Activated CD4-positive, alpha-beta memory T cell treated with anti-CD3 and anti-CD28 coated beads for 36 hours (primary cell): ENCODE measurements at regions of chr17 and their contacts with region 1.

Region 1: GRCh38 chr17:33520426-33521330 is 227.6 kb upstream of the ASIC2 start:
- DNase-seq: peak; percentile 59
- H3K4me3 Mint-ChIP-seq: no peak overlapping the region
- H3K27ac Mint-ChIP-seq: no peak overlapping the region
- H3K4me1 Mint-ChIP-seq: no peaks in the 10 kb centered on the region
- H3K27me3 Mint-ChIP-seq: no peaks in the 10 kb centered on the region

Region 2: GRCh38 chr17:33049781-33050414 is 470.8 kb before region 1 on chr17:
- CTCF ChIA-PET with region 1: no interaction called
- POLR2A ChIA-PET with region 1: no interaction called
- intact Hi-C with region 1: loop called (anchors 10 kb)
- DNase-seq: peak; percentile 51
- H3K4me3 Mint-ChIP-seq: no peak overlapping the region
- H3K27ac Mint-ChIP-seq: no peak overlapping the region
- H3K4me1 Mint-ChIP-seq: no peaks in the 10 kb centered on the region
- H3K27me3 Mint-ChIP-seq: peaks cover 12% of the 10 kb centered on the region

Region 3: GRCh38 chr17:33750943-33751701 is 230.4 kb after region 1 on chr17:
- CTCF ChIA-PET with region 1: interaction called, 4 read pairs
- POLR2A ChIA-PET with region 1: no interaction called
- intact Hi-C with region 1: loop called (anchors 2 kb)
- DNase-seq: peak; percentile 76
- H3K4me3 Mint-ChIP-seq: peak overlapping the region; percentile 7
- H3K27ac Mint-ChIP-seq: no peak overlapping the region
- H3K4me1 Mint-ChIP-seq: peaks cover 3% of the 10 kb centered on the region
- H3K27me3 Mint-ChIP-seq: peaks cover 33% of the 10 kb centered on the region